ENCODE measurements at regions of chr2 and their contacts with region 1.

Region 1: GRCh38 chr2:201130524-201131186 is 14.7 kb downstream of the CFLAR start:
- DNase-seq: no peak
- ATAC-seq: peak; percentile 59; the same call in 1 of the 2 replicates
- H3K4me3 ChIP-seq: no peak overlapping the region
- H3K27ac ChIP-seq: no peak overlapping the region
- H3K4me1 ChIP-seq: peaks cover 43% of the 10 kb centered on the region
- H3K27me3 ChIP-seq: no peaks in the 10 kb centered on the region
- CTCF ChIP-seq: no peak

Region 2: DNA sequence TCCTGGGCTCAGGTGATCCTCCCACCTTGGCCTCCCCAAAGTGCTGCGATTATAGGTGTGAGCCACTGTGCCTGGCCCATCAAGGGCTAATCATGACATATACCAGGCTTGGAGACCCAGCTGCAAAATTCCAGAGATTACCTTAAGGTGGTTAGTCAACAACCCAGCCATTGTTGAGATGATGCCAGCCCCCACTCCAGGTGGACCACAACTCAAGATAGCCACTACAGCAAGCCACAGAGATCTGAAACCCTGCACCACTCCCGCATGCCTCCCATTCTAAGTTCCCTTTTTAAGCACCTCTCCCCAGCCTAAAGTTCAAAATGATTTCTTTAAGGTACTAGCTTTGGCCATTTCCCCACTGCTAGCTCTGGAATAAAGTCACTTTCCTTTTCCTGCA is 261.6 kb before region 1 on chr2:
- CTCF ChIA-PET with region 1: no interaction called
- POLR2A ChIA-PET with region 1: no interaction called
- in situ Hi-C with region 1: no loop called
- intact Hi-C with region 1: no loop called
- DNase-seq: no peak
- ATAC-seq: no peak
- H3K4me3 ChIP-seq: no peak overlapping the region
- H3K27ac ChIP-seq: no peak overlapping the region
- H3K4me1 ChIP-seq: peaks cover 4% of the 10 kb centered on the region; the same call in 1 of the 2 replicates
- H3K27me3 ChIP-seq: no peaks in the 10 kb centered on the region
- CTCF ChIP-seq: no peak

Region 3: GRCh38 chr2:200985799-200986198 is 144.9 kb before region 1 on chr2:
- CTCF ChIA-PET with region 1: no interaction called
- POLR2A ChIA-PET with region 1: interaction called, 10 read pairs
- in situ Hi-C with region 1: no loop called
- intact Hi-C with region 1: no loop called
- DNase-seq: no peak
- ATAC-seq: no peak
- H3K4me3 ChIP-seq: no peak overlapping the region
- H3K27ac ChIP-seq: no peak overlapping the region
- H3K4me1 ChIP-seq: no peaks in the 10 kb centered on the region
- H3K27me3 ChIP-seq: no peaks in the 10 kb centered on the region
- CTCF ChIP-seq: no peak

Region 4: GRCh38 chr2:201040867-201041628 is 89.6 kb before region 1 on chr2:
- CTCF ChIA-PET with region 1: no interaction called
- POLR2A ChIA-PET with region 1: no interaction called
- in situ Hi-C with region 1: no loop called
- intact Hi-C with region 1: no loop called
- DNase-seq: no peak
- ATAC-seq: no peak
- H3K4me3 ChIP-seq: no peak overlapping the region
- H3K27ac ChIP-seq: no peak overlapping the region
- H3K4me1 ChIP-seq: no peaks in the 10 kb centered on the region
- H3K27me3 ChIP-seq: no peaks in the 10 kb centered on the region
- CTCF ChIP-seq: no peak

Region 5: GRCh38 chr2:201118121-201118960 is 12.3 kb before region 1 on chr2:
- CTCF ChIA-PET with region 1: no interaction called
- POLR2A ChIA-PET with region 1: interaction called, 10 read pairs
- in situ Hi-C with region 1: no loop called
- intact Hi-C with region 1: no loop called
- DNase-seq: peak; percentile 73
- ATAC-seq: peak; percentile 63
- H3K4me3 ChIP-seq: peak overlapping the region; percentile 67 to 84
- H3K27ac ChIP-seq: peak overlapping the region; percentile 100
- H3K4me1 ChIP-seq: peaks cover 48% of the 10 kb centered on the region
- H3K27me3 ChIP-seq: no peaks in the 10 kb centered on the region
- CTCF ChIP-seq: peak; percentile 76

Region 6: DNA sequence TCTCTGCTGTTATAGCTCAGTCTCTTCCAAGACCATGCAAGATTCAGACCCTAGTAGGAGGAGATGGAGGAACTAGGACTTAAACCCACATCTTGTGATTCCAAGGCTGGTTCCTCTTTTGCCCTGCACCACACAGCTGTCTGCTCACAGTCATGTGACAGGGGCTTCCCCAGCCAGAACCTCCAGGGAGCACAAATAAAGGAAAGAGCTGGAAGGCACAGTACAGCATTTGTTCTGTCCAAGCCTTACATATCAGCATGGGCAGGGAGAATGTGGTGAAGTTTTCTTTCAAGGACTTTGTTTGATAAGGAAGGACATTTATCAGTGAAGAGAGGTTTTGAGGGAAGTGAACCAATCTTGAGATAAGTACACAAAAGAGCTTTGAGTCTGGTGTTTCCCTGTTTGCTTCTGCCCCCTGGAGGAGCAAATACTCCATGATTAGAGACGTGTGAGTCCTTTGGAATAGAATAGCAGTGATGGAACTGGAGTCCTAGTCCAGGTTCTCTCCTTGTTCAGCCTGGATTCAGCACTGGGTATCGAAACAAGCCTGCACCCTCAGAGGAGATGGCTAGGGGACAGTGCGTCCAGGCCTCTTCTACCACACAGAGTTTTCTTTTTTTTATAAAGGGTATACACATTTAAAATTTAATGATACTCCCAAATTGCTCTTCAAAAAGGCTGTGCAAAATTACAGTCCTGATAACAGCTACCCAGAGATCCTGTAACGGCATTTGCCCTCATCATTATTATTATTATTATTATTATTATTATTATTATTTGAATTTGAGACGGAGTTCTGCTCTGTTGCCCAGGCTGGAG is 27.7 kb after region 1 on chr2:
- CTCF ChIA-PET with region 1: no interaction called
- POLR2A ChIA-PET with region 1: interaction called, 12 read pairs
- in situ Hi-C with region 1: no loop called
- intact Hi-C with region 1: no loop called
- DNase-seq: peak; percentile 67
- ATAC-seq: peak; percentile 92
- H3K4me3 ChIP-seq: no peak overlapping the region
- H3K27ac ChIP-seq: peak overlapping the region; percentile 45; the same call in 1 of the 2 replicates
- H3K4me1 ChIP-seq: peaks cover 8% of the 10 kb centered on the region
- H3K27me3 ChIP-seq: no peaks in the 10 kb centered on the region
- CTCF ChIP-seq: peak; percentile 79

Region 7: GRCh38 chr2:201196003-201196402 is 65.3 kb after region 1 on chr2:
- CTCF ChIA-PET with region 1: no interaction called
- POLR2A ChIA-PET with region 1: interaction called, 14 read pairs
- in situ Hi-C with region 1: no loop called
- intact Hi-C with region 1: no loop called
- DNase-seq: no peak
- ATAC-seq: no peak
- H3K4me3 ChIP-seq: no peak overlapping the region
- H3K27ac ChIP-seq: no peak overlapping the region
- H3K4me1 ChIP-seq: no peaks in the 10 kb centered on the region
- H3K27me3 ChIP-seq: no peaks in the 10 kb centered on the region
- CTCF ChIP-seq: no peak